ENCODE measurements at regions of chr6 and their contacts with region 1.

Region 1: GRCh38 chr6:70566751-70567382 is at the start of gene SDHAF4:
- DNase-seq: peak; percentile 95 to 98
- ATAC-seq: peak; percentile 98
- H3K4me3 ChIP-seq: peak within 1 kb of the TSS; percentile 67 to 84
- H3K27ac ChIP-seq: peak within 1 kb of the TSS in 1 of 2 donors; percentile 58
- H3K4me1 ChIP-seq: no peaks in the 10 kb centered on the region
- H3K27me3 ChIP-seq: no peaks in the 10 kb centered on the region
- total RNA-seq, gene SDHAF4: 6.3 to 7.9 TPM

Region 2: DNA sequence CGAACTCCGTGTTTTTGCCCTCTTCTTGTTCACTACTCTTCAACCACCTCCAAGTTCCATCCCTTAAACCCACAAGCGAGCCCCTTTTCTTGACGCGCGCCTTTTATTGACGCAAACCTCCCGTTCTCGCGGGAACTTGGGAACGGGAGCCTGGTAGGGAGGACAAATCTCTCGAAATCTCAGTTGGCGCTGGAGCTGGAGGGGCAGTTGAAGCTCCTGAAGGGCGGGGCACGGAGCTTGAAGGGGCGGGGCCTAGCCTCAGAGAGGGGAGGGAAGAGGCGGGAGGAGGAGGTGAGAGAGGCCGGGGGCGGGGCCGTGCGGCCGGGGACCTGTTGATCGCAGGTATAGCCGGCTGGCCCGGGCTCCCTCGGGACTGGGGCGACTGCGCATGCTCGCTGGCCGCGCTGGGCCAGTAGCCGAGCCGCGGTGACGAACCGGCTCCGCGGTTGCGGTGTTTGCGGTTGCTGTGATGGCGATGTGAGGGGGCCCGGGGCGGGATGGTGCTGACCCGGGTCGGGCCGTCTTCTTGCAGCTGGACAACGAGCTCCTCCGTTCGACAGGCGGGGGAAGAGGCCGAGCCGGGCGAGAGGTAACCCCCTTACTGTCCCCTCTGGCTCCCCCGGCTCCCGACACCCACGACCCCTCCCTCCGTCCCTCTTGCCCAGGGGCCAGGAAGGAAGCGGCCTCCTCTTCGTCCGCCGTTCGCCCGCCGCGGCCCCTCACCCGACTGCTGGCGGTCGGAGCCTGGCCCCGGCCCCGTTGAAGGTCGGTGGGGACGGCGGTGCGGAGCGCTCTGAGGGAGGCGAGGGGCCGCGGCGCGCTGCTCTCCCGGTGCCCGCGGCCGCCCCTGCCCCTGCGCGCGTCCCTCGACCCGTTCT is 153.5 kb before region 1 on chr6 and contains the start of gene FAM135A:
- intact Hi-C with region 1: loop called in 1 of 2 experiments (anchors 10 kb)
- DNase-seq: peak; percentile 98
- ATAC-seq: peak; percentile 99
- H3K4me3 ChIP-seq: peak within 1 kb of the TSS; percentile 88
- H3K27ac ChIP-seq: peak within 1 kb of the TSS in 1 of 2 donors; percentile 65
- H3K4me1 ChIP-seq: peaks cover 0 to 3% of the 10 kb centered on the region in 2 donors
- H3K27me3 ChIP-seq: no peaks in the 10 kb centered on the region
- total RNA-seq, gene FAM135A: 21.6 to 25.7 TPM

Region 3: GRCh38 chr6:70667711-70668498 is 101.0 kb after region 1 on chr6 and contains the start of gene SMAP1:
- intact Hi-C with region 1: loop called (anchors 5 kb)
- DNase-seq: peak; percentile 97 to 98
- ATAC-seq: peak; percentile 99
- H3K4me3 ChIP-seq: peak within 1 kb of the TSS; percentile 49 to 98
- H3K27ac ChIP-seq: peak within 1 kb of the TSS; percentile 43 to 76
- H3K4me1 ChIP-seq: peaks cover under 1 to 3% of the 10 kb centered on the region in 2 donors
- H3K27me3 ChIP-seq: no peaks in the 10 kb centered on the region
- total RNA-seq, gene SMAP1: 24.5 to 24.7 TPM